Mammary epithelial cell (primary cell): ENCODE measurements at regions of chr11 and their contacts with region 1.

Region 1: GRCh38 chr11:36672813-36673450 is 74.9 kb upstream of the RAG2 start:
- DNase-seq: peak; percentile 39
- H3K4me3 ChIP-seq: no peak overlapping the region
- H3K27ac ChIP-seq: no peak overlapping the region
- H3K4me1 ChIP-seq: no peaks in the 10 kb centered on the region
- H3K27me3 ChIP-seq: no peaks in the 10 kb centered on the region
- CTCF ChIP-seq: peak; percentile 64 to 74

Region 2: DNA sequence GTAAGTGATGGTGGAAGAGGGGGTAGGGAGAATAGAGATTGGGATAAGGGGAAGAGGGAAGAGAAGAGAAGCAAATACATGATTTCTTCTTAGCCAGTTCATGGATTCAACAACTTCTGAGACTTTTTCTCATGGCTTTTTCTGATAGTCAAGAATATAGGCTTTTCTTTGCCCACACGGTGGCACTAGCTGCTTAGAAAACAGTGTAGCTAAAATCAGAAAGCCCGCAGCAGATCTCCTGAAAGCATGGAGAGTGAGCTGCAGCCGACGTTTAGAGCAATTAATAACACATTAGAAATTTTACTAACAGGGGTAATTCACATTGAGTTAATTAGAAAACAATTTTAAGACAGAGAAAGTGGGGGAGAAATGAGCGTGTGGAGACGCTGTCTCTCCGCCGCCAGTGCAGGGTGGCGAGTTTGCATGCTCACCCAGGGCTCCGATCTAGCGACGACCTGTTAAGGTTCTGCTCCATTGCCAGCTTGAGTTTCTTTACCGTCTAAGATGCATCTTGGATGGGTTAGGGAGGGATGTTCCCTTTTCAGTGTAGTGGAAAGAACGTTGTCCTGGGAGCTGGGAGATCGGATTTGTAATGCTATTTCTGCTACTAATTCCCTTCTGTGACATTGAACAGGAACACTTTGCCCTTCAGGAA is 108.4 kb before region 1 on chr11:
- CTCF ChIA-PET with region 1: no interaction called
- dilution Hi-C with region 1: no loop called
- in situ Hi-C with region 1: loop called in 1 of 2 experiments (anchors 25 kb)
- intact Hi-C with region 1: loop called (anchors 1 kb)
- DNase-seq: peak; percentile 38
- H3K4me3 ChIP-seq: peak overlapping the region; percentile 27 to 35 (median 28)
- H3K27ac ChIP-seq: no peak overlapping the region
- H3K4me1 ChIP-seq: no peaks in the 10 kb centered on the region
- H3K27me3 ChIP-seq: no peaks in the 10 kb centered on the region
- CTCF ChIP-seq: peak; percentile 64 to 72

Region 3: GRCh38 chr11:36605221-36606216 is 67.4 kb before region 1 on chr11:
- CTCF ChIA-PET with region 1: no interaction called
- dilution Hi-C with region 1: loop called (anchors 5 kb)
- in situ Hi-C with region 1: no loop called
- intact Hi-C with region 1: no loop called
- DNase-seq: no peak
- H3K4me3 ChIP-seq: no peak overlapping the region
- H3K27ac ChIP-seq: no peak overlapping the region
- H3K4me1 ChIP-seq: no peaks in the 10 kb centered on the region
- H3K27me3 ChIP-seq: no peaks in the 10 kb centered on the region
- CTCF ChIP-seq: no peak

Region 4: DNA sequence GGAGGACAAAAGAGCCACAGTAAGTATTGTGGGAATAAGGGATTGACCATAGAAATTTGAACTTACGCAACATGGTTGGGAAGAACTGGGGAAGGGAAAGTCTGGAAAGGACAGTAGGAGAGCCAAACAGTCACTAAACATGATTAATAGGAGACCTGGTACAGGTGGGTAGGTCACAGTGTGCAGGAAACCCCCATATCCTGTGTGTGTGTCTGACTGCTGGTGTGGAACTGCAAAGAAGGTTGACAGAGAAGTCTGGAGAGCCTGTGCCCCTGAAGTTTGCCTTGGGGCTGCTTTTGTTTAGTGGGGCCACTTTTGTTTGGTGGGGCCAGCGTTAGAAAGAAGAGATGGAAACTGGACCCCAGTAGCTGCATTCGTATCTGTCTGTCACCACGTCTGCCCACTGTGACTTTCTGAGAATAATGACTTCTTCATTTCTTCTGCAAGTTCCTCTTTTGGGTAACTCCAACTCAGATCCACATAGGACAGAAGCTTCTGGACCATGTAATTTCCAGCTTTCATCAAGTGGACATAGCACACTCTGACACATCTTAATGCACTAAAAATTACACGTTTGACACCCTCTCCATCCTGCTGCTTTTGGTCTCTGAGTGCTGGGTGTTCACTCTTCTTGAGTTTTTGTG is 51.9 kb after region 1 on chr11:
- CTCF ChIA-PET with region 1: no interaction called
- dilution Hi-C with region 1: loop called (anchors 5 kb)
- in situ Hi-C with region 1: no loop called
- intact Hi-C with region 1: no loop called
- DNase-seq: no peak
- H3K4me3 ChIP-seq: no peak overlapping the region
- H3K27ac ChIP-seq: no peak overlapping the region
- H3K4me1 ChIP-seq: no peaks in the 10 kb centered on the region
- H3K27me3 ChIP-seq: no peaks in the 10 kb centered on the region
- CTCF ChIP-seq: no peak